PC-3 (cell line): ENCODE measurements at regions of chr2 and their contacts with region 1.

Region 1: DNA sequence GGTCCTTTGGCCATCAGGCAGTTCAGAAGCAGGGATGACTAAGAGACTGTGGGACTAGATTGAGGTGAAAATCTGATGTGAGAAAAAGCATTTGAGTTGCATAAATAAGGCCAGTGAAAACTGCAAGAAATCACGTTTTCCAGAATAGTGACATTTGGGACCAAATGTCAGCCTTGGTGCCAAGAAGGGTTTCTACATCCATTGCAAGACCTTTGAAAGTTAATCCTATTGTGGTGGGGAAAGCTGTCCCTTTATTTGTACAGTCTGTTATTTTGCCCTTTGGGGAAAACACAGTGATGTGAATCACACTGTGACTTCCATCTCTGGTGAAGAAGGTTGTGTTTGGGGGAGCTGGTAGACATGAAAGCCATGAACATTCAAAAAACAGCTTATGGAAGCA is 153.5 kb upstream of the SIX2 start:
- DNase-seq: no peak
- ATAC-seq: no peak
- H3K4me3 ChIP-seq: no peak overlapping the region
- H3K27ac ChIP-seq: no peak overlapping the region
- H3K4me1 ChIP-seq: peaks cover 29% of the 10 kb centered on the region
- H3K27me3 ChIP-seq: no peaks in the 10 kb centered on the region
- CTCF ChIP-seq: no peak

Region 2: DNA sequence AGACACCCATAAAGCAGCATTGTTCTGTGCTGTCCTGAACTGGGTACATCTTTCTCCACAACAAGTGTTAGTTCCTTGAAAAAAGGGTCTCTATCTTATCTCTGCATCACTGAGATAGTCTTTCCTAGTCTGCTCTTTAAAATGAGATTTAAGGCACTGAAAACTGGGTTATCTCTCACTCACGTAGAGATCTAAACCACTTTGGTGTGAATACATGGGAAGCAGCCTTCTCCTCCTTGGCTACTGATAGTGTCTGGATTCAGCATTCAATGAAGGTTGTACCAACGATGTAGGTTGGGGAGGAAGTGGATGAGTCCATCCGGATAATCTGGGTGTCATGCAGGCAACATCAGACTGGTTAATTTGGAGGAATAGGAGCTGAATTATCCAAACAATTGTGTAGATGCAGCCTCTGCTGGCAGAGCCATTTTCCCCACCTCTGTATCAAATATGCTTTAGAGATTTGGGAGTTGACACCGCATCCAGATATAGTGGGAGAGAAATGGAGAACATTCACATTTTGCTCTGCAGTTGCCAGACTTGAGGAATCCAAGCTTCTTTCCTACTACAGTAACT is 237.1 kb before region 1 on chr2:
- CTCF ChIA-PET with region 1: no interaction called
- POLR2A ChIA-PET with region 1: interaction called, 10 read pairs
- intact Hi-C with region 1: no loop called
- DNase-seq: no peak
- ATAC-seq: no peak
- H3K4me3 ChIP-seq: no peak overlapping the region
- H3K27ac ChIP-seq: no peak overlapping the region
- H3K4me1 ChIP-seq: no peaks in the 10 kb centered on the region; the same call in 1 of the 2 replicates
- H3K27me3 ChIP-seq: peaks cover 28% of the 10 kb centered on the region
- CTCF ChIP-seq: no peak